Activated T-helper 1 cell treated with anti-CD3 and anti-CD28 coated beads, Interleukin-12 subunit alpha, Interleukin-12 subunit beta, Interleukin-2, Interleukin-4 antibody, amounts not matched to agents 30 ng/mL and 10 ng/mL and 1 ng/mL, durations not matched to agents 14 hours and 24 hours and 36 hours (primary cell): ENCODE measurements at regions of chr13 and their contacts with region 1.

Region 1: GRCh38 chr13:110965038-110965754 is 50.3 kb upstream of the ANKRD10 start:
- DNase-seq: peak; percentile 55
- H3K4me3 Mint-ChIP-seq: peak overlapping the region; percentile 32
- H3K27ac Mint-ChIP-seq: peak overlapping the region; percentile 95
- H3K4me1 Mint-ChIP-seq: peaks cover 54% of the 10 kb centered on the region
- H3K27me3 Mint-ChIP-seq: peaks cover 2% of the 10 kb centered on the region

Region 2: GRCh38 chr13:111011899-111012298 is 46.7 kb after region 1 on chr13:
- intact Hi-C with region 1: loop called (anchors 2 kb)
- DNase-seq: peak; percentile 14
- H3K4me3 Mint-ChIP-seq: peak overlapping the region; percentile 71
- H3K27ac Mint-ChIP-seq: peak overlapping the region; percentile 93
- H3K4me1 Mint-ChIP-seq: peaks cover 48% of the 10 kb centered on the region
- H3K27me3 Mint-ChIP-seq: peaks cover 4% of the 10 kb centered on the region

Region 3: DNA sequence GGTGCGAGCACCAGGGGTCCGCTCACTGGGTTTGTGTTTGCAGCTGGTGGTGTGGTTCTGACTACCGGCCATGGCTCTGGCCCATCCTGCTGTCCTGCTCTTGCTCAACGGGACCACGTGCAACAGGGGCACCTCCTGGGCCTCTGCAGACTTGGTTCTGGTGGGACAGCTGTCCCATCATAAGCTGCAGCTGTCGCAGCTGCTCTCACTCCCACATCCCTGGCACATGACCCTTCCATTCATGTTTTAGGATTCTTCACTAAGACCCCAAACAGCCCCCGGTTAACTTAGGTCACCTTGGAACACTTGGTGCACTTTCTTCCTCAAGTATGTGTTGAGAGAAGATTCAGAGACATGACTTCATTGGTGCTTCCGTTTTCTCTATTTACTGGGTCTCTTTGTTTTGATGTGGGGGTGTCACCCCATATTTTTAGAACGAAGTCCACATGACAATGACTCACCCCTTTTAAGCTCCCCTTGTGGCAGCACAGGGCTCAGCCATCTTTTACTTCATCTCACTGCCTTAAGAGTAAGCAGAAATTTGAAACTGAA is 81.5 kb after region 1 on chr13:
- intact Hi-C with region 1: loop called (anchors 1 kb)
- DNase-seq: no peak
- H3K4me3 Mint-ChIP-seq: no peak overlapping the region
- H3K27ac Mint-ChIP-seq: peak overlapping the region; percentile 56
- H3K4me1 Mint-ChIP-seq: peaks cover 11% of the 10 kb centered on the region
- H3K27me3 Mint-ChIP-seq: peaks cover 8% of the 10 kb centered on the region